ENCODE measurements at regions of chr6 and their contacts with region 1.

Region 1: GRCh38 chr6:64330694-64331307 is 695.2 kb downstream of the PHF3 start:
- DNase-seq: no peak
- H3K4me3 ChIP-seq: no peak overlapping the region
- H3K27ac ChIP-seq: no peak overlapping the region
- H3K4me1 ChIP-seq: no peaks in the 10 kb centered on the region
- H3K27me3 ChIP-seq: no peaks in the 10 kb centered on the region
- CTCF ChIP-seq: peak in 9 of 11 experiments; percentile 12 to 67 (median 42)
- POLR2A ChIP-seq: no peak

Region 2: DNA sequence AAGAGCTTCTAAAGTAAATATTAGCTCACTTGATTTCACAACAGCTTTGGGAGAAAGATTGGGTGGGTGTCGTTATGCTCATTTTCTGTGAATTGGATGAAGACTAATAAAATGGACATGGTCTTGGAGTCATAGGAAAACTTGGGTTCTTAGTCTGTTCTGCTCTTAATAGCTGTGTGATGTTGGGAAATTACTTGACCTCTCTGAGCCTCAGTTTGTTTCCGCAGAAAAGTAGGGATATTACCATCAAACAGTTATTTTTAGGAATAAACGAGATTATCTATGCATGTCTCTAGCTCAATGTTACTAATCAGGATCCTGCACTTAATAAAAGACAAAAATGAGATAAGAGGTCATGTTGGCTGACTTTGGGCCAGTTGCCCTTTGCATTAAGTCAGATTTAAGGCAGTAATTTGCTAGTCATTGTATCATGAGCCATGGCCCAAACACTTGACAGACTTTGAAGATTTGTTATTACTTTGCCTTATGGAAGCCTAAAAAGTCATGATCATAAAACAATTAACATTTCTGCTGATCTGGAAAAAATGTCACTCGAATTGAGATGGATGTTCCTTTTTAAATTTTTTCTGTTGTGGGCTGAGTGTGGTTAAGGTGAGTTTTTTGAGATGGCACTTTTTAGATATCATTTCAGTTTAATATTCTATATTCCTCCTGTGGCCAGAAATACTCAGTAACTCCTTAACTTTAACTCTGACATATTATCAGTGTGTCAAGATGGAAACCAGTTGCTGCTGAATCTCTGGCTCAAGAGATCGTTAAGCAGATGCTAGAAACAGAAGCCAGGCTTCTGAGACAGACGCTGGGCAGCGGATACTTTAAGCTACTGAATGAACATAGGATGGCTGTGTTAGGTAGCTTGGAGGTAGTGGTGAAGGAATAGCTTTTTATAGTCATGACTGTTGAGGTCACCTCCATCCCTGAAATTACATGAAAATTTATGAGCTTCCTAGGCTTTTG is 403.6 kb before region 1 on chr6:
- intact Hi-C with region 1: loop called (anchors 5 kb)
- DNase-seq: no peak
- H3K4me3 ChIP-seq: no peak overlapping the region
- H3K27ac ChIP-seq: no peak overlapping the region
- H3K4me1 ChIP-seq: no peaks in the 10 kb centered on the region
- H3K27me3 ChIP-seq: no peaks in the 10 kb centered on the region
- CTCF ChIP-seq: no peak
- POLR2A ChIP-seq: no peak

Region 3: GRCh38 chr6:64012351-64013001 is 318.3 kb before region 1 on chr6:
- intact Hi-C with region 1: no loop called
- DNase-seq: no peak
- H3K4me3 ChIP-seq: peak overlapping the region in 1 of 8 donors; percentile 0
- H3K27ac ChIP-seq: no peak overlapping the region
- H3K4me1 ChIP-seq: peaks cover 0 to 3% (median 0%) of the 10 kb centered on the region in 6 donors
- H3K27me3 ChIP-seq: no peaks in the 10 kb centered on the region
- CTCF ChIP-seq: peak in 1 of 11 experiments; percentile 34
- POLR2A ChIP-seq: no peak